ENCODE measurements at regions of chr4 and their contacts with region 1.

Region 1: GRCh38 chr4:98928505-98929340 is at the start of gene EIF4E:
- H3K4me3 Mint-ChIP-seq: peak within 1 kb of the TSS; percentile 92
- H3K27ac Mint-ChIP-seq: peak within 1 kb of the TSS; percentile 93
- H3K4me1 Mint-ChIP-seq: peaks cover 31% of the 10 kb centered on the region
- H3K27me3 Mint-ChIP-seq: no peaks in the 10 kb centered on the region

Region 2: GRCh38 chr4:98143001-98143899 is 785.5 kb before region 1 on chr4 and contains the start of gene STPG2:
- intact Hi-C with region 1: loop called (anchors 5 kb)
- H3K4me3 Mint-ChIP-seq: peak within 1 kb of the TSS; percentile 78
- H3K27ac Mint-ChIP-seq: peak within 1 kb of the TSS; percentile 92
- H3K4me1 Mint-ChIP-seq: peaks cover 11% of the 10 kb centered on the region
- H3K27me3 Mint-ChIP-seq: peaks cover 5% of the 10 kb centered on the region

Region 3: DNA sequence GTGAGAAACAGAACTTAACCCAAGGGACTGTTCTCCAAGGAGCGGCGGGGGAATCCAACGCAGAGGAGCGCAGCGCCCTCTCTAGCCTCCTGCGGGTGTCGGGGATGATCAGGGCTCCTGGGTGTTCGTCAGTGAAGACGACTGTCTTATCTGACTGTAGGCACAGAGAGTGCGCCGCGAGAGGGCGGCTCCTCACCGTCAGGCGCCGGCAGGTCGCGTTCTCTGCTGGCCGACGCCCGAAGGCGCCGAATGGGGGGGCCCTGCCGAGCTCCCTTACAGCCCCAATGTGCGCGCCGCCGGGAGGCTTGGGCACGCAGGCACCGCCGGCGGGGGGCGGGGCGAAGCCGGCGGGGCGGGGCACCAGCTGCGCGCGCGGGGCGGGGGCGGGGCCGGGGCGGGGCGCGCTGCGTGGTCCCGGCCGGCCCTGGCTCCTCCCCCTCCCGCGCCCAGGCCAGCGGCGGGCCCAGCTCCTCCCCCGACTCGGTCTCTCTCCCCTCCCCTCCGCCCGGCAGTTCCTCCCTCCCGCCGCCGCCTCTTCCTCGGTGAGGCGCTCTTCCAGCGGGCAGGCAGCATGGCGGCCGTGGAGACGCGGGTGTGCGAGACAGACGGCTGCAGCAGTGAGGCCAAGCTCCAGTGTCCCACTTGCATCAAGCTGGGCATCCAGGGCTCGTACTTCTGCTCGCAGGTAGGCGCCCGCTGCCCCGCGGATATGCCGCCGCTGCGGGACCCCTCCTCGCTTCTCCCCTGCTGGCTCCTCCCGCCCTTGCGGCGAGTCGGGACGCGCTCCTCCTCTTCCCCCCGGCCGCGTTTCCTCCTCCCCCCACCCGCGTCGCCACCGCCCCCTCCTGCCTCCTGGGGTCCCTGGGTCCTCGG is 66.7 kb after region 1 on chr4 and contains the start of gene METAP1:
- intact Hi-C with region 1: loop called (anchors 1 kb)
- H3K4me3 Mint-ChIP-seq: peak within 1 kb of the TSS; percentile 86
- H3K27ac Mint-ChIP-seq: peak within 1 kb of the TSS; percentile 94
- H3K4me1 Mint-ChIP-seq: peaks cover 27% of the 10 kb centered on the region
- H3K27me3 Mint-ChIP-seq: peaks cover 3% of the 10 kb centered on the region

Region 4: GRCh38 chr4:99088481-99089365 is 160.0 kb after region 1 on chr4 and contains the start of gene ADH5:
- intact Hi-C with region 1: loop called (anchors 5 kb)
- H3K4me3 Mint-ChIP-seq: peak within 1 kb of the TSS; percentile 89
- H3K27ac Mint-ChIP-seq: peak within 1 kb of the TSS; percentile 93
- H3K4me1 Mint-ChIP-seq: peaks cover 47% of the 10 kb centered on the region
- H3K27me3 Mint-ChIP-seq: peaks cover 2% of the 10 kb centered on the region